PC-9 (cell line): ENCODE measurements at regions of chr3 and their contacts with region 1.

Region 1: DNA sequence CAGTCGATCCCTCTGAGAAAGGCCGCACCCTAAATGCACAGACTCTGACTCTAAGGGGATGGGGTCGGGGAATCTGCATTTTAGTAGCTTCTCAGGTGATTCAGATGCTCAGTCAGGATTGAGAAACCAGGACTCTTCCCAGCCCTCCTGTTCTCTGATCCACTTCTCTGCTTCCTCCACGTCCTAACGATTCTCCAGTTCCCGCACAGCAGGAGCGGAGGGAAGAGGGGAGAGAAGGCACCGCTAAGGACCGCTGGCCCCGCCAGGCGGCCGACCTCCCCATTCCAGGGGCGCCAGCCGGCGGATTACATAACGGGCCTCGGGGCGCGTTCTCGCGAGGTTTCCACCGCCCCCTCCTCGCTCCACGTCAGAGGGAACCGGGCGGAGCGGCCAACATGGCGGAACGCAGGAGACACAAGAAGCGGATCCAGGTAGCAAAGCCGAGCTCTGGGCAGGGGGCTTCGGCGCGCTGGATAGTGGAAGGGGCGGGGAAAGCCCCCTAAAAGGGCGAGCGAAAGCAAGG is at the start of gene SEC62:
- DNase-seq: peak; percentile 81 to 96
- H3K4me3 ChIP-seq: peak within 1 kb of the TSS; percentile 63
- H3K27ac ChIP-seq: peak within 1 kb of the TSS; percentile 54
- H3K4me1 ChIP-seq: peaks cover 25% of the 10 kb centered on the region
- H3K27me3 ChIP-seq: no peaks in the 10 kb centered on the region
- CTCF ChIP-seq: peak; percentile 37; the same call in 1 of the 2 replicates
- total RNA-seq, gene SEC62: 61.8 and 99.6 TPM in 2 replicates

Region 2: GRCh38 chr3:169041677-169042171 is 924.8 kb before region 1 on chr3:
- CTCF ChIA-PET with region 1: no interaction called
- POLR2A ChIA-PET with region 1: no interaction called
- intact Hi-C with region 1: loop called (anchors 5 kb)
- DNase-seq: peak in 1 of 2 experiments; percentile 66
- H3K4me3 ChIP-seq: no peak overlapping the region
- H3K27ac ChIP-seq: no peak overlapping the region
- H3K4me1 ChIP-seq: peaks cover 25% of the 10 kb centered on the region
- H3K27me3 ChIP-seq: no peaks in the 10 kb centered on the region
- CTCF ChIP-seq: peak; percentile 78

Region 3: GRCh38 chr3:169772897-169773828 is 193.3 kb before region 1 on chr3 and contains the start of gene MYNN:
- CTCF ChIA-PET with region 1: no interaction called
- POLR2A ChIA-PET with region 1: interaction called, 7 read pairs
- intact Hi-C with region 1: loop called (anchors 1 kb)
- DNase-seq: peak; percentile 84 to 91
- H3K4me3 ChIP-seq: peak within 1 kb of the TSS; percentile 84
- H3K27ac ChIP-seq: peak within 1 kb of the TSS; percentile 92
- H3K4me1 ChIP-seq: peaks cover 13% of the 10 kb centered on the region
- H3K27me3 ChIP-seq: no peaks in the 10 kb centered on the region
- CTCF ChIP-seq: no peak; the same call in 1 of the 2 replicates
- total RNA-seq, gene MYNN: 13.7 and 18.2 TPM in 2 replicates

Region 4: GRCh38 chr3:169863458-169863899 is 103.0 kb before region 1 on chr3:
- CTCF ChIA-PET with region 1: no interaction called
- POLR2A ChIA-PET with region 1: no interaction called
- intact Hi-C with region 1: loop called (anchors 1 kb)
- DNase-seq: peak; percentile 71
- H3K4me3 ChIP-seq: no peak overlapping the region
- H3K27ac ChIP-seq: no peak overlapping the region
- H3K4me1 ChIP-seq: no peaks in the 10 kb centered on the region
- H3K27me3 ChIP-seq: no peaks in the 10 kb centered on the region
- CTCF ChIP-seq: peak; percentile 99

Region 5: GRCh38 chr3:170044795-170045244 is 78.3 kb after region 1 on chr3:
- CTCF ChIA-PET with region 1: no interaction called
- POLR2A ChIA-PET with region 1: interaction called, 4 read pairs
- intact Hi-C with region 1: loop called (anchors 5 kb)
- DNase-seq: no peak
- H3K4me3 ChIP-seq: no peak overlapping the region
- H3K27ac ChIP-seq: no peak overlapping the region
- H3K4me1 ChIP-seq: peaks cover 46% of the 10 kb centered on the region
- H3K27me3 ChIP-seq: no peaks in the 10 kb centered on the region
- CTCF ChIP-seq: no peak